HepG2 (cell line): ENCODE measurements at regions of chr10 and their contacts with region 1.

Region 1: GRCh38 chr10:73743905-73744663 is at the start of gene SEC24C:
- DNase-seq: peak; percentile 95
- ATAC-seq: peak; percentile 92
- H3K4me3 ChIP-seq: peak within 1 kb of the TSS; percentile 79 to 99 (median 98)
- H3K27ac ChIP-seq: peak within 1 kb of the TSS; percentile 92
- H3K4me1 ChIP-seq: peaks cover 40% of the 10 kb centered on the region
- H3K27me3 ChIP-seq: no peaks in the 10 kb centered on the region; a peak in 1 of 5 replicates
- CTCF ChIP-seq: no peak
- EP300 ChIP-seq: 0 out of 4 replicates have a peak, but pooled peaks of 1 of the 2 experiments have one; percentile 33
- POLR2A ChIP-seq: peak; percentile 73 to 91
- RAD21 ChIP-seq: no peak; the same call in 1 of the 2 replicates
- total RNA-seq, gene SEC24C: 63.1 and 66.5 TPM in 2 replicates

Region 2: DNA sequence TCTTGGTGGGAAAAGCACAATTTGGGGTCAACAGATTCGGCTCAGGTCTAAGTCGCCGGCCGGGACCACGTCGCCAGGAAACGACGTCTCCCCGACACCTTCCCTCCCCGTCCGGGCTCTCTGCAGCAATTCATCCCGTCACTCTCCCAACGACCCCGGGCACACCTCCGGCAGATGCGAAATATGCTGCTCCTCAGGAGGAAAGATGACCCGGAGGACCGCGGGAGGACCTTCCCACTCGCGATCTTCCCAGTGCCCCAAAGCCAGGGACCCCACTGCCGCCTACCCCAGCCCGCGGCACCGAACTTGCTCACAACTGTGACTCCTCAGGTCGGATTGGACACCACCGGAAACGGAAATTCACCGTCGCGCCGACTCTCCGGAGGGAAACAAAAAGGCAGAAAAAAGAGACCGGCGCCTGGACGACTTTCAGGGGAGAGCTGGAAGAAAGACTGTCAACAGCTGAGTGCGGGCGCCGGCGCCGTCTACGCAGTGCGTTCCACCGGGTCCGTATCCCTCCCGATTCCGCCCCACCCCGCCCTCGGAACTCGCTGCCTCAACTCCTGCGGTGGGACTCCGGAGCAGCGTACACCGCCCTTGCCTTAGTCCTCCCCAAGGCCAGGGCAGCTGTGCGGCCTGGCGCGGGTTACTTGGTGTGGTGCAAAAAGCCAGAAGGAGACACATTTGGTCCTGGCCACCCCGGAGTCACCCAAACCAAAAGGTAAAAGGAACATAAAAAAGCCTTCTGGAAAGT is 13.8 kb before region 1 on chr10:
- CTCF ChIA-PET with region 1: no interaction called
- POLR2A ChIA-PET with region 1: interaction called, 85 read pairs
- in situ Hi-C with region 1: no loop called
- intact Hi-C with region 1: no loop called
- DNase-seq: peak; percentile 89
- ATAC-seq: peak; percentile 92
- H3K4me3 ChIP-seq: peak overlapping the region; percentile 88 to 100 (median 96)
- H3K27ac ChIP-seq: peak overlapping the region; percentile 96
- H3K4me1 ChIP-seq: no peaks in the 10 kb centered on the region; the same call in 1 of the 2 replicates
- H3K27me3 ChIP-seq: no peaks in the 10 kb centered on the region; a peak in 1 of 5 replicates
- CTCF ChIP-seq: no peak; the same call in 1 of the 2 replicates
- EP300 ChIP-seq: 0 out of 4 replicates have a peak, but pooled peaks of 1 of the 2 experiments have one; percentile 16
- POLR2A ChIP-seq: peak; percentile 91 to 92
- RAD21 ChIP-seq: peak; percentile 53

Region 3: GRCh38 chr10:73827346-73828089 is 83.4 kb after region 1 on chr10:
- CTCF ChIA-PET with region 1: no interaction called
- POLR2A ChIA-PET with region 1: no interaction called
- in situ Hi-C with region 1: no loop called
- intact Hi-C with region 1: no loop called
- DNase-seq: no peak
- ATAC-seq: no peak
- H3K4me3 ChIP-seq: no peak overlapping the region
- H3K27ac ChIP-seq: no peak overlapping the region
- H3K4me1 ChIP-seq: no peaks in the 10 kb centered on the region
- H3K27me3 ChIP-seq: no peaks in the 10 kb centered on the region
- CTCF ChIP-seq: no peak
- EP300 ChIP-seq: no peak
- POLR2A ChIP-seq: no peak
- RAD21 ChIP-seq: no peak